Aorta (tissue), 5 donors: ENCODE measurements at regions of chr18 and their contacts with region 1.

Region 1: GRCh38 chr18:3665780-3666525 is 216.0 kb downstream of the TGIF1 start:
- DNase-seq: peak; percentile 84 to 92
- ATAC-seq: peak; percentile 95
- H3K4me3 ChIP-seq: no peak overlapping the region
- H3K27ac ChIP-seq: peak overlapping the region; percentile 13 to 30
- H3K4me1 ChIP-seq: no peaks in the 10 kb centered on the region
- H3K27me3 ChIP-seq: no peaks in the 10 kb centered on the region

Region 2: GRCh38 chr18:3508576-3509549 is 157.1 kb before region 1 on chr18:
- intact Hi-C with region 1: loop called in 1 of 2 experiments (anchors 10 kb)
- DNase-seq: no peak
- ATAC-seq: peak; percentile 47
- H3K4me3 ChIP-seq: no peak overlapping the region
- H3K27ac ChIP-seq: no peak overlapping the region
- H3K4me1 ChIP-seq: no peaks in the 10 kb centered on the region
- H3K27me3 ChIP-seq: no peaks in the 10 kb centered on the region

Region 3: DNA sequence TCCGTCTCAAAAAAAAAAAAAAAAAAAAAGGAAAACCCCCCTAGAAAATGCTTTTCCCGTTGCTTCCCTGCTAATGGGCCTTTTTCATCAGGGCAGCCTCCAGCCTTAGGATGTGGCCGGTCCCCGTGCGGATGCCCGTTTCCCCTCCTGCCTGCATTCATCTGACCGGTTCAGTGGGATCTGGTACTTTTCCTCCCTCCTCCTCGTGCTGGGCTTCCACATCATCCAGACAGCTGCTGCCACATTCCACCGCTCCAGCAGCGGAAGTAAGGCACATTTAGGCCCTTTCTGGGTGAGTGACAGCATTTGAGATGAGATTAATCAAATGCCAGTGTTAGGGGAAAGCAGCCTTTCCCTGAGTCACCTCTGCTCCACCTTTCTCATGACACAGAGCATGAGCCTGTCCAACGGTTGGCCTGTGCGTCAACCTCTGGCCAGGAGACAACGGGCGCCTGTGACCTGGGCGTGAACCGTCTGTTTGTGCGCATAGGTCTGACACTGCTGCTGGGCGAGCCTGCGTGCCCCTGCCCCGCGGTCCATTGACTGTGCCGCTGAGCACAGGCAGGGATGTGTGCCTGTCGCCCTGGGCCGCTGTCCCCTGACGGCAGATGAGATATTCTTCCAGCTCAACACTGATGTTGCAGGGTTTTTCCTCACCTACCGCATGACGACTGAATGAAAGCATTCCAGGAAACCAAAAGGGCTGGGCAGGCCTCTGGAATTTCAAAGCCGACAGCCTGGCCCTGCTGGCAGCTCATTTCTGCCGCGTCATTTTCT is 42.0 kb before region 1 on chr18:
- intact Hi-C with region 1: loop called (anchors 5 kb)
- DNase-seq: peak; percentile 85 to 93
- ATAC-seq: peak; percentile 84
- H3K4me3 ChIP-seq: no peak overlapping the region
- H3K27ac ChIP-seq: peak overlapping the region; percentile 65 to 70
- H3K4me1 ChIP-seq: peaks cover 0 to 2% of the 10 kb centered on the region in 2 donors
- H3K27me3 ChIP-seq: no peaks in the 10 kb centered on the region